Ascending aorta (tissue), 2 donors: ENCODE measurements at regions of chr1 and their contacts with region 1.

Region 1: GRCh38 chr1:40862008-40862863 is at the start of gene CITED4:
- DNase-seq: peak; percentile 82 to 97
- H3K4me3 ChIP-seq: peak within 1 kb of the TSS; percentile 97
- H3K27ac ChIP-seq: peak within 1 kb of the TSS; percentile 79 to 87
- H3K4me1 ChIP-seq: peaks cover 10 to 25% of the 10 kb centered on the region in 2 donors
- H3K27me3 ChIP-seq: no peaks in the 10 kb centered on the region
- CTCF ChIP-seq: peak in 2 of 3 experiments; percentile 14 to 30
- total RNA-seq, gene CITED4: 47.6 TPM

Region 2: DNA sequence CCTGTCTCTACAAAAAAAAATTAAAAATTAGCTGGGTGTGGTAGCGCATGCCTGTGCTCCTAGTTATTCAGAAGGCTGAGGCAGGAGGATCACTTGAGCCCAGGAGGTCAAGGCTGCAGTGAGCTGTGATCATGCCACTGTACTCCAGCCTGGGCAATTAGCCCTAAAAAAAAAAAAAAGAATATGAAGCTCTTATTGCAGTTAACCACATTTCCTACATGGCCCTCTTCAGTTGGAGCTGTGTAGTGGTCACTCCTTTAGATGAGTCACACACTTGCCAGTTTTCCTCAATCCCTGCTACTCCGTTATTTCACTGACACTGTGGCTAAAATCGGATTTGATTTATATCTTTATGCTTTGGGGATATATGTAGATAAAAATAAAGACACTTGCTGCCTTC is 158.9 kb before region 1 on chr1:
- intact Hi-C with region 1: no loop called
- DNase-seq: no peak
- H3K4me3 ChIP-seq: no peak overlapping the region
- H3K27ac ChIP-seq: no peak overlapping the region
- H3K4me1 ChIP-seq: peaks cover 0 to 20% of the 10 kb centered on the region in 2 donors
- H3K27me3 ChIP-seq: no peaks in the 10 kb centered on the region
- CTCF ChIP-seq: no peak

Region 3: DNA sequence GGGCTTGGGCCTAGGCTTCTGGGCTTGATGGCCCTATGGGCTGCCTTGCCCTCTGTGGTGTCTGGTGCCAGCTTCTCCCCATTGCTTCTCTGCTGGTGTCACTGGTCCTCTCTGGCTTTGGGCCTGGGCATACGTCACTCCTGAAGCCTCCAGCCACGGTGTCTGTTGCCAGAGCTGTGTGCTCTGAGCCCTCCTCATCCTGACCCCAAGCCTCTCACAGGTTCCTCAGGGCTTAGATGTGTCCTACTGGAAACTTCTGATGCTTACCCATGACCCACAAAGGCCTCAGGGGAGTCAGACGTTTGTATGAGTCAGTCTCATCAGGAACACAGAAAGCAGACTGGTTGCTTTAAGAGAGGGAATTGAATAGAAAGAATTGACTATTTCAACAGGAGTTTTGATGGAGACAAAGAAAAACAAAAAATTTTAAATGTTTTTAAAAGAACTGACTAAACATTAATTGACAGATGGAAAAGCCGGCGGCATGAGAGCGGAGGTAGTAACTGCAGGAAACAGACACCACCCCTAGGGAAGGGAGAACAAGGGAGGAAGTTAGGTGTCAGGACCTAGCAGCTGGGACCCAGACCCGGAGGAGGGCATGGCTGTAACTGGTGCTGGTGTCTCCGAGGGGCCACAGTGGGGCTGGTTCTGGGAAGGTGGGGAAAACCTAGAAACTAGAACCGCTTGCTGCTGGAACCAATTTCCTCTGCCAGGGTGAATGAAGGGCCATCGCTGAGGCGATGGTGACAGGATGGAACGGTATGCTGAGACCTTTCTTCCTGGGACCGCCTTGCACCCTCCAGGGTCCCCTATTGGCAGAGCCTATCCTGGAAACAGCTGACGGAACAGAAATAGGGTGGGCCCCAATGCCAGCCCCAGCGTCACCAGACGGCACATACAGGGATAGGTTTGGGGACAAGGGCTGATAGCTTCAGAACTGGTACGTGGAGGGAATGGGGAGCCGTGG is 39.9 kb after region 1 on chr1:
- intact Hi-C with region 1: loop called (anchors 5 kb)
- DNase-seq: peak in 1 of 2 donors; percentile 83
- H3K4me3 ChIP-seq: no peak overlapping the region
- H3K27ac ChIP-seq: peak overlapping the region; percentile 58 to 61
- H3K4me1 ChIP-seq: peaks cover 0 to 29% of the 10 kb centered on the region in 2 donors
- H3K27me3 ChIP-seq: no peaks in the 10 kb centered on the region
- CTCF ChIP-seq: no peak